ENCODE measurements at regions of chr15 and their contacts with region 1.

Region 1: DNA sequence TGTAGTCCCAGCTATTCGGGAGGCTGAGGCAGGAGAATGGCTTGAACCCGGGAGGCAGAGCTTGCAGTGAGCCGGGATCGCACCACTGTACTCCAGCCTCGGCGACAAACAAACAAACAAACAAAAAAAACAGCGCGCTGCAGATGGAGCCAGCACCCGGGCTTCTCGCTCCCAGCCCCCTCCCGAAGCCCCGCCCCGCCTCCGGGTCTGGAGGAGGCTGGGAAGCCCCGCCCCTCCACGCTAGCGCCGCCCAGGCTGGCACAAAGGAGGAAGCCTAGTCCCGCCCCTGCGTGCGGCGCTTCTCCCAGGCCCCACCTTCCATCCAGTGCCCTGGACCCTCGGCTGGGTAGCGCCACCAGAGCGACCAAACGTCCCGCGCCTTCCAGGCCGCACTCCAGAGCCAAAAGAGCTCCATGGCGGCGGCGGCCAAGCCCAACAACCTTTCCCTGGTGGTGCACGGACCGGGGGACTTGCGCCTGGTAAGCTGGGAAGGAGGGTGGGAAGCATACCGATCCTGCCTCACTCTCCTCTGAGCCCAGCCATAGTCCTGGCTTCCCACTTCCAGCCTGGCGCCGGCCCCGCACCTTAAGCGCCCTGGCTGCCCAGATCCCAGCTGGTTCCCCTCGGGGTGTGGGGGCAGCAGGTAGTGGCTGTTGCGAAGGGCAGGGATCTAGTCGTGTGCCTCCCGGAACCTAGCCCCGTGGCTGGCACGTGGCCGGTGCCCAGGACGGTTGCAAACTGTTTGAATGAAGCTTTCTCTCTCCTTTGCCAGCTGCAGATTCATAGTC is at the start of gene SORD:
- DNase-seq: peak; percentile 16
- H3K4me3 ChIP-seq: peak within 1 kb of the TSS; percentile 74
- H3K27me3 ChIP-seq: no peaks in the 10 kb centered on the region; the same call in 1 of the 2 replicates
- CTCF ChIP-seq: no peak
- polyA plus RNA-seq, gene SORD: 20.7 and 30.4 TPM in 2 replicates

Region 2: GRCh38 chr15:45037936-45038335 is 14.9 kb after region 1 on chr15:
- CTCF ChIA-PET with region 1: interaction called, 17 read pairs
- POLR2A ChIA-PET with region 1: no interaction called
- DNase-seq: no peak
- H3K4me3 ChIP-seq: no peak overlapping the region
- H3K27me3 ChIP-seq: no peaks in the 10 kb centered on the region
- CTCF ChIP-seq: no peak

Region 3: DNA sequence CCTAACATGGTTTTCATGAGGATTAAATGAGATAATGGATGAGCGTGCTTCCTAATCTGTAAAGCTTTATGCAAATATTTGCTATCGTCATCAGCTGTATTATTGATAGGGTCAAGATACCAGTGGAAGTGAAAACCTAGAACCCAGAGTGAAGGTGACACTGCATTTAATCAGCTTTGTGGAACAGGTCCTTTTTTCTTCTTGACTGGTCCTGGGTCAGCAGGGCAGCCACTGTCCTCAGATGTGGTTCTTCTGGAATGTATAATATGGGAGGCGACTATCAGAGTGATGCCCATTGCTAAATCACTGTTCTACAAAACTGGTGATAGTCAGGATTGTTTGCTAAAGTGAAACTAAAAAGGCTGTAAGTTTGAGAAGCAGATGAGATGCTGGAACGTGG is 41.3 kb after region 1 on chr15:
- CTCF ChIA-PET with region 1: no interaction called
- POLR2A ChIA-PET with region 1: no interaction called
- DNase-seq: no peak
- H3K4me3 ChIP-seq: no peak overlapping the region
- H3K27me3 ChIP-seq: no peaks in the 10 kb centered on the region
- CTCF ChIP-seq: no peak